ENCODE measurements at regions of chr1 and their contacts with region 1.

Region 1: DNA sequence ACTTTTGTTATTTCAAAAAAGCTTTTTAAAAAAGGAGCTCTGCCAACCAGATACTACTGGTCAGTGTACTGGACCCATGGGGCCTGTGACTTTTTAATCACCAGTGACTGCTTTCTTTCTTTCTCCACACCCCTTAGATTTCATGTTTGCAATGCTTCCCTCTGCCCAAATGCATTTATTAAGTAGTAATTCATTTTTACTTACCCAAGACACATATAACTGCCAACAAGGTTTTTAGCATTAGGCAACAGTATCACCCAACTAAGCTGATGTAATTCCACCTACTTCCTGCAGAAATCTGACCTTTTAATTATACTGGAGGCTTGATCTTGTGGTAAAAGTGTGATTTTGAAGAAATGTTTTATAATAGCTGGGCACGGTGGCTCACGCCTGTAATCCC is 12.5 kb downstream of the MECR start:
- DNase-seq: no peak
- H3K4me3 ChIP-seq: no peak overlapping the region
- H3K27ac ChIP-seq: no peak overlapping the region
- H3K27me3 ChIP-seq: no peaks in the 10 kb centered on the region
- CTCF ChIP-seq: no peak

Region 2: DNA sequence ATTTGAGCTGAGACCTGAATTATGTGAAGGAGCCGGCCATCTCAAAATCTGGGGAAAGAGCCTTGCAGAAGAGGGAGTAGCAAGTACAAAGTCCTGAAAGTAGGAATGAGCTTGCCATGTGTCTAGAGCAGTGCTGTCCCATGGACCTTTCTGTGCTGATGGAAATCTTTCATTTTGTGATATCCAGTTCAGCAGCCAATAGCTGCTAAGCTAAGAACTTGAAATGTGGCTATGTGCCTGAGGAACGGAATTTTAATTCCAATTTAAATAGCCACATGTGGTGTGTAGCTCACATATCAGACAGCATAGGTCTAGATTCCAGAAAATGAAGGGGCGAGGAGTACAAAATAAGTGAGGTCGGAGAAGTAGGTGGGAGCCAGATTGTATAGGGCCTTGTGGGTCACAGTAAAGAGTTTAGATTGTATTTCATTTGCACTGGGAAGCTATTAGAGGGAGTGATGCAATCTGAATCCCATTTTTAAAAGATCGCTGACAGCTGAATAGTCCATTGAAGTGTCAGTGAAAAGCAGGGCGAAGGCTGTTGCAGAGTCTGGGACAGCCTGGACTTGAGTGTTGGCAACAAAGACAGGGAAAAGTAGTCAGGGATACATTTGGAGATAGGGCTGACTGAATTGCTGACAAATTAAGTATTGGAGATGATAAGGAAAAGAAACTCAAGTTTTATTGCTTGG is 174.8 kb before region 1 on chr1:
- CTCF ChIA-PET with region 1: no interaction called
- POLR2A ChIA-PET with region 1: no interaction called
- DNase-seq: no peak
- H3K4me3 ChIP-seq: no peak overlapping the region
- H3K27ac ChIP-seq: no peak overlapping the region
- H3K27me3 ChIP-seq: no peaks in the 10 kb centered on the region
- CTCF ChIP-seq: no peak

Region 3: GRCh38 chr1:29171089-29171488 is 47.1 kb before region 1 on chr1:
- CTCF ChIA-PET with region 1: no interaction called
- POLR2A ChIA-PET with region 1: no interaction called
- DNase-seq: no peak
- H3K4me3 ChIP-seq: no peak overlapping the region
- H3K27ac ChIP-seq: no peak overlapping the region
- H3K27me3 ChIP-seq: no peaks in the 10 kb centered on the region
- CTCF ChIP-seq: no peak

Region 4: DNA sequence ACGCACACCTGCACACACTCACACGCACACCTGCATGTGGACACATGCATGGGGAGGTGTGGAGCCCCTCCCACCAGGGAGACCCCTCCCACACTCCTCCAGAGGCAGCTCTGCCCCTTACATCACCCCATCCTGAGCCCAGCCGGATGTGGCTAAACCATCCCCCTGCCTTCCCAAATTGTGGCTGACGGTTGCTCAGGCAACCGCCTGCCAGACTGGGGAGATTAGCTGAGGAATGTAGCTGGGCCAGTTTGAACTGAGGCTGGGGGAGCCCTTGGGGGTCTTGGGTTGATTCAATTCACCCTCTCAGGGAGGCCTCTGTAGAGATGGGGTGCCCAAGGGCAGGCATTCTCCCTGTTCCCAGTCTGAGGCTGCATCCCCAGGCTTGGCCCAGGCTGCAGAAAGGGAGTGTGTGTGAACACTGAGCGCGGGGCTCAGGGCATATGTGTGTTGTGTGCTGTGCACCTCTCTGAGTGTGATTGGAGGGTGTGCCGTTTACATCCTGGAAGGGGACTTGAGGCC is 31.0 kb after region 1 on chr1:
- CTCF ChIA-PET with region 1: no interaction called
- POLR2A ChIA-PET with region 1: no interaction called
- DNase-seq: no peak
- H3K4me3 ChIP-seq: no peak overlapping the region
- H3K27ac ChIP-seq: peak overlapping the region; percentile 11
- H3K27me3 ChIP-seq: no peaks in the 10 kb centered on the region
- CTCF ChIP-seq: no peak

Region 5: GRCh38 chr1:29264773-29265389 is 46.7 kb after region 1 on chr1:
- CTCF ChIA-PET with region 1: no interaction called
- POLR2A ChIA-PET with region 1: interaction called, 11 read pairs
- DNase-seq: no peak
- H3K4me3 ChIP-seq: no peak overlapping the region
- H3K27ac ChIP-seq: no peak overlapping the region
- H3K27me3 ChIP-seq: no peaks in the 10 kb centered on the region
- CTCF ChIP-seq: no peak

Measured in AG04450 (cell line).